PC-9 (cell line): ENCODE measurements at regions of chr19 and their contacts with region 1.

Region 1: DNA sequence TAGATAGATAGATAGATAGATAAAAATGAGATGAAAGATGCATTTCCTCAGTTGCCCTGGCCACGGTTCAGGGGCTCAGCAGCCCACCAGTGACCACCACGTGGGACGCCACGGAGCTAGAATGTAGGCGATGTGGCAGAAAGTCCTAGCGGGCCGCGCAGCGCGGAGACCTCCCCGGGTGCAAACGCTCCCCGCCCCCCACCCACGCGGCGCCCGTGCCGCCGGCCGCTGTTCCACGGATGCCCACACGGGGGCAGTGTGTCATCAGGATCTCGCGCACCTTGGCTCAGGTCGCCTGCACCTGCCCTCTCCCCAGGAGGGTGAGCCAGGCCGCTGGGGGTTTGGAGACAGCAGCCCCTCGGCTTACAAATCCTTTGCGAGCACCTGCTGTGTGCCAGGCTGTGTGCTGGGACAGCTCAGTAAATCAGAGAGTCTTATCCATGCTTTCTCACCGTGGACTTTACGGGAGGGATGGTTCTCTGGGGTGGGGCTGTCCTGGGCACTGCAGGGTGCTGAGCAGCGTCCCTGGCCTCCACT is 13.7 kb upstream of the TLE5 start:
- DNase-seq: peak in 1 of 2 experiments; percentile 49
- H3K4me3 ChIP-seq: no peak overlapping the region
- H3K27ac ChIP-seq: no peak overlapping the region
- H3K4me1 ChIP-seq: no peaks in the 10 kb centered on the region; the same call in 1 of the 2 replicates
- H3K27me3 ChIP-seq: no peaks in the 10 kb centered on the region
- CTCF ChIP-seq: peak; percentile 87

Region 2: GRCh38 chr19:2869618-2870017 is 206.3 kb before region 1 on chr19:
- CTCF ChIA-PET with region 1: no interaction called
- POLR2A ChIA-PET with region 1: no interaction called
- intact Hi-C with region 1: no loop called
- DNase-seq: no peak
- H3K4me3 ChIP-seq: no peak overlapping the region
- H3K27ac ChIP-seq: no peak overlapping the region
- H3K4me1 ChIP-seq: no peaks in the 10 kb centered on the region
- H3K27me3 ChIP-seq: no peaks in the 10 kb centered on the region
- CTCF ChIP-seq: no peak

Region 3: GRCh38 chr19:3094601-3095437 is 18.9 kb after region 1 on chr19:
- CTCF ChIA-PET with region 1: no interaction called
- POLR2A ChIA-PET with region 1: no interaction called
- intact Hi-C with region 1: no loop called
- DNase-seq: no peak
- H3K4me3 ChIP-seq: peak overlapping the region; percentile 75
- H3K27ac ChIP-seq: no peak overlapping the region
- H3K4me1 ChIP-seq: no peaks in the 10 kb centered on the region
- H3K27me3 ChIP-seq: no peaks in the 10 kb centered on the region
- CTCF ChIP-seq: no peak

Region 4: DNA sequence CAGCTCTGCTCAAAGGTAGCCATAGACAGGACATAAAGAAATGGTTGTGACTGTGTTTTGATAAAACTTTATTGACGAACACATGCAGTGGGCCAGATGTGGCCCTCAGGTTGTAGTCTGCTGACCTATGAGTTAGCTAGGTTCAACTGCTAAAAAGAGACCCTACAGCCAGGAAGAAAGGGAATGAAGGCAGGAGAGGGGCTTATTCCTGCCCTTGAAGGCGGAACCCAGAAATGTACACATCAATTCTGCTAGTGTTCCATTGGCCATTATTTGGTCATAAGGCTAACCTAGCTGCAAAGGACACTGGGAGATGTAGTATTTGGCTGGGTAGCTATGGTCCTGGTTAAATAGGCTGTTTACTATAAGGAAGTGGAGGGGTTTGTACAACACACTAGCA is 667.5 kb after region 1 on chr19:
- CTCF ChIA-PET with region 1: interaction called, 13 read pairs
- POLR2A ChIA-PET with region 1: no interaction called
- intact Hi-C with region 1: no loop called
- DNase-seq: no peak
- H3K4me3 ChIP-seq: no peak overlapping the region
- H3K27ac ChIP-seq: no peak overlapping the region
- H3K4me1 ChIP-seq: no peaks in the 10 kb centered on the region
- H3K27me3 ChIP-seq: no peaks in the 10 kb centered on the region
- CTCF ChIP-seq: no peak